OCI-LY7 (cell line): ENCODE measurements at regions of chr3 and their contacts with region 1.

Region 1: DNA sequence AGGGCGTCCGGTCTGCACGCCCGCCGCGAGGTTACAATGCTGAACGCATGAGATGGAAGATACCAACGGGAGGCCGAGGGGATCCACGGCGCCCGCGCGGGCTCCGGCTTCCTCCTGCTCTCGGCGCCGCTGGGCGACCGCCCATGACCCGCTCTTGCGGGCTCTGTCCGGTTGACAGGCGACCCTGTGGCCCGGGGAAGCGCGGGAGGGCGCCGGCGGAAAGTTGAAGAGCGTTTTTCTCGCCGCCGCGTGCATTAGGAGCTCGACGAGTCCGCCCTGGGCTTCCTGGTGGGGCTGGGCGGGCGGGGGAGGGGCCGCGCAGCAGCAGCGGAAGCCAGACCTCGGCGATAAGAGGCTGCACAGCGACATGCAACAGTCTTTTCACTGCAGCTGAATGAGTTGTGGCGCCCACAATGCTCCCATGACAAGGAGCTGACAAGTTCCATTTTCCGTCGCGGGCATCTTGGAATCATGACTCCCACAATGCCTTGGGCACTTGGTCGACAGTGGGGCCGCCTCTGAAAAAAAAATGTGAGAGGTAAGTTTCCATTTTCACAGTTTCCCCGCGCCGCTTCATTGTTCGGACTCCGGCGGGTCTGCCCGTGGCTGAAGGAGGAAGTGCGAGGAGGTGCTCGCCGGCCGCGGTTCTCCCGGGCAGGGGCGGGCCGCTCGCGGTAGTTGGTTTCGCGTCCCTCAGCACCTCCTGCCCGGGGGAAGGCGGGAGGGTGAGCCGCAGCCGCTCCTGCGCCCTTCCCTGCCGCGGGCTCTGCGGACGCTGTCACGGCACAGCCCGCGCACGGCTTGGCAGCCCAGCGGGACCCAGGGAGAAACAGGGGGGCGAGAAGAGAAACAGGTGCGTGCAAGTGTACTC is at the start of gene MBNL1:
- DNase-seq: peak; percentile 94
- H3K4me3 ChIP-seq: peak within 1 kb of the TSS; percentile 79
- H3K27ac ChIP-seq: peak within 1 kb of the TSS; percentile 94
- H3K4me1 ChIP-seq: peaks cover 50% of the 10 kb centered on the region
- CTCF ChIP-seq: no peak
- total RNA-seq, gene MBNL1: 125 and 163 TPM in 2 replicates

Region 2: DNA sequence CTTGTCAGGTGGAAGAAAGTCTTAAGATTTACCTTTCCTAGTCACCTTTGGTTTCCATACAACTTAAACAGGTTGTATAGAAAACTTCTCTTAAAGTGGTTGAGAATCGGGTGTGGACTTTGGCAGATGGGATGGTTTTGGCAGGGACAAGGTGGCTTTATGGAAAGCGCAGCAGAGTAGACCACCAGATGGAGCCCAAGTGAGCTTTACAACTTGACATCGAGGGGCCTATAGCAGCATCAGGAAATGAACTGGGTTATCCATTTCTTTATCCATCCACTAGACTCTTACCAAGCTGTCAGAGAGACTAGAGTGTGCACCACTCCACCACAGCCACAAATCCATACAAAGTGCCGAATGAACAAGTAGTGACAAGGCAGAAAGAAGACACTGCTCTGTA is 85.3 kb before region 1 on chr3:
- CTCF ChIA-PET with region 1: no interaction called
- POLR2A ChIA-PET with region 1: interaction called, 4 read pairs
- intact Hi-C with region 1: loop called (anchors 5 kb)
- DNase-seq: peak; percentile 79
- H3K4me3 ChIP-seq: no peak overlapping the region
- H3K27ac ChIP-seq: no peak overlapping the region
- H3K4me1 ChIP-seq: peaks cover 3% of the 10 kb centered on the region
- CTCF ChIP-seq: peak; percentile 98

Region 3: DNA sequence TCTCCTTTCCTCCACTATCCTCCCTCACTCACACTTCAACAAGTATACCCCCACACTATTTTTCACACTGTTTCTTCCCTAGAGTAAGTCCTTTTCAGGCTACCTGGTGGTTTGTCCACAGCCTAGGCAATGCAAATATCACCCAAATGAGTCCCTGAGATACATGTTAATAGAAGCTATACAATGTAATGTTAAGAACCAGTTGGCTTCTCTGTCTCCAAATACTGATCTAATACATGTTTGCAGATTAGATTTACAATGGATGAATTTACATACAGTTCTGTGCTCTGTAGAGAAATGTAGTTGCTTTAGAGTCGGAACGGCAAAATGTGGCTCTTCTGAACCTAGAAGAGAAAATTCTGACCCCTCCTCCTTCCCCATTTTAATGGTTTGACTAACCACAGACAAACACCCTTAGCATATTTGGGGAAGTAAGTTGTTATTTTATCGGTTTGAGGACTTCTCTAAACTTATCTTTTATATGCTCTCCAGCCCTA is 63.6 kb before region 1 on chr3:
- CTCF ChIA-PET with region 1: no interaction called
- POLR2A ChIA-PET with region 1: interaction called, 24 read pairs
- intact Hi-C with region 1: no loop called
- DNase-seq: peak; percentile 48
- H3K4me3 ChIP-seq: peak overlapping the region; percentile 60
- H3K27ac ChIP-seq: peak overlapping the region; percentile 23
- H3K4me1 ChIP-seq: peaks cover 53% of the 10 kb centered on the region
- CTCF ChIP-seq: no peak

Region 4: DNA sequence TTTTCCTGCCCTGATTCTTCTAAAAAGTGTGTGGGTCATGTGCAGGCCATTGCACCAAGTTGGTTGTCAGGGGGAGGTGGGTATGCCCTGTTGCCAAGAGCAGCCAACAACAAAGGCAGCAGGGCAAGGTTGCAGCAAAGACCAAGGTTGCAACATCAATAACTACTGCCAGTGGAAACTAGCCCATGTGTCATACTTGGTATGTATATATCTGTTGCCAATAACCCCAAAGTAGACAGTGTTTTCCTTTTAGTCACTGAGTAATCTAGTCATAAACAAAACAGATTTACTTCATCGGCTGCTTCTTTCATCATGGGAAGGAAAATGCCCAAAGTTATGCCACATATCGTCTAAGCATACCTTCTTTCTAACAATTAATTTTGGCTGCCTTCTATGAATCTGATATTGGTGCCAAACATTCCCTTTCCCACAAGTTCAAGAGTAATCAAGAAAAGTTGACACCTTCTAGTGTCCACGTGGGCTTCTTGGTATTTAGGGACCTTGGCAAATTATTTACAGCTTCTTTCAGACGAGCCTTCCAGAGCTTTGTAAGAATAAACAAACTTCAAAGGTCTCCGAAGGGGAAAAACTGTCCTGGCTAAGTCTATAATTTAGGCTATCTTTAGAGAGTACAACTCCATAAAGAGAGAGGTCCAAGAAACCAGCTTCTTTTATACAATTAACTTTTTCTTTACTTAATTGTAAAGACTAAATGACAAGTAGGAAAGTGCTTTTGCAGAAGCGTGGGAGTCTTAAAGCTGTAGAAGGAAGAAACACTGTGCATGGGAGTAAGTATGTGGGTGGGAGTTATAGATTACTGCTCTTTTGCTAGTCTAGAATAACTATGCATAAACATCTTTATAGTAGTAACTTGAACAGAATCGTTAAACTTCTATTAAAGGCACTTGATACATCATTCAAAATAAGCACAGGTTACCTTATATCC is 10.1 kb before region 1 on chr3:
- CTCF ChIA-PET with region 1: no interaction called
- POLR2A ChIA-PET with region 1: interaction called, 51 read pairs
- intact Hi-C with region 1: no loop called
- DNase-seq: no peak
- H3K4me3 ChIP-seq: no peak overlapping the region
- H3K27ac ChIP-seq: no peak overlapping the region
- H3K4me1 ChIP-seq: peaks cover 59% of the 10 kb centered on the region
- CTCF ChIP-seq: no peak

Region 5: GRCh38 chr3:152376351-152377183 is 107.8 kb after region 1 on chr3:
- CTCF ChIA-PET with region 1: no interaction called
- POLR2A ChIA-PET with region 1: interaction called, 8 read pairs
- intact Hi-C with region 1: loop called (anchors 1 kb)
- DNase-seq: peak; percentile 95
- H3K4me3 ChIP-seq: peak overlapping the region; percentile 55
- H3K27ac ChIP-seq: peak overlapping the region; percentile 92
- H3K4me1 ChIP-seq: peaks cover 77% of the 10 kb centered on the region
- CTCF ChIP-seq: no peak